CD8-positive, alpha-beta memory T cell (primary cell): ENCODE measurements at regions of chr11 and their contacts with region 1.

Region 1: DNA sequence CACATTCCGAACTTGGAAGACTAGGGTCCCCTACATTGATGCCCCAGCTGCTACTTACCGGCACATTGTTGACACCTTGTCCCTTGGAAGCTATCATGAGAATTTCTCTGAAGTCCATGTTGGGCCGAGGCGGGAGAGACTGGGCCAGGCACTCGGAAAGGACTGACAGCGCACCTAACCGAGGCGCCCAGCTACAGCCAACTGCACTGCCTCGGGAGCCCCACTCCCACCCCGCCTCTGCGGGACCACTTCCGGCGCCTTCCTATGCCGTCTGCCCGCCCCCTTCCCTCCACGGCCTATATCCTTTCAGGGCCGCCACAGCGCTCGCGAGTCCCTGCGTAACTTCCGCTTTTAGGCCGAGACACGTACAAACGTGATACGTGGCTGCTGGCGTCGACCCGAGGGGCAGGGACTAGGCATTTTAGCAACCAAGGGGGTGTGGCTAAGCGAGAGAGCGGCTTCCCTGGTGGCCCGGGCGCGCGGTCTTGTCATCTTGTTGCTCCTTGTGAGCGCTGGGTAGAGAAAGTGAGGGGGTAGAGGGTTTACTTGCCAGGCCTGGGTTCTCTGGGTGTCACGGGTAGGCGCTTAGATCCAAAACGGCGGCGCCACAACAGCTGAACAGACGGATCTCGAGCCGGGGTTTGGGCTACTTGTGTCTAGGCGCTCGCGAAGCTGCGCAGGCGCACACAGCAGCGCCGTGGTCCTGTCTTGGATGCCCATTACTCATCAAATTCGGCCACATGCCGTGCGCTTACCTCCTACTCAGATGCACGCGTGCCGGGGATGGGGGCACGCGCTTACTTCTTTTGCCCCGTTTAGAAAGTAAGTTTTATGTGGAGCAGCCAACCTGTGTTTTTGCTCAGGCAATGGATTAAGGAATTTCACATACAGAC is at the start of gene SPTY2D1:
- DNase-seq: peak; percentile 94 to 99 (median 98)
- H3K4me3 ChIP-seq: peak within 1 kb of the TSS; percentile 99
- H3K4me3 Mint-ChIP-seq: peak within 1 kb of the TSS; percentile 90 to 99 (median 96)
- H3K27ac ChIP-seq: peak within 1 kb of the TSS; percentile 93
- H3K27ac Mint-ChIP-seq: peak within 1 kb of the TSS; percentile 96 to 100 (median 98)
- H3K4me1 ChIP-seq: peaks cover 17% of the 10 kb centered on the region
- H3K4me1 Mint-ChIP-seq: peaks cover 27 to 39% (median 38%) of the 10 kb centered on the region in 3 donors
- H3K27me3 ChIP-seq: no peaks in the 10 kb centered on the region
- H3K27me3 Mint-ChIP-seq: peaks cover 4 to 5% of the 10 kb centered on the region in 2 donors
- total RNA-seq, gene SPTY2D1: 23.7 to 27.3 TPM

Region 2: GRCh38 chr11:18588297-18589252 is 45.8 kb before region 1 on chr11 and contains the start of gene UEVLD:
- CTCF ChIA-PET with region 1: no interaction called
- POLR2A ChIA-PET with region 1: interaction called, 18 read pairs
- DNase-seq: peak; percentile 43 to 75 (median 63)
- H3K4me3 ChIP-seq: peak within 1 kb of the TSS; percentile 79
- H3K4me3 Mint-ChIP-seq: no peak within 1 kb of the TSS
- H3K27ac ChIP-seq: peak within 1 kb of the TSS; percentile 83
- H3K27ac Mint-ChIP-seq: no peak within 1 kb of the TSS
- H3K4me1 ChIP-seq: peaks cover 24% of the 10 kb centered on the region
- H3K4me1 Mint-ChIP-seq: peaks cover 0 to 9% (median 0%) of the 10 kb centered on the region in 3 donors
- H3K27me3 ChIP-seq: no peaks in the 10 kb centered on the region
- H3K27me3 Mint-ChIP-seq: no peaks in the 10 kb centered on the region
- total RNA-seq, gene UEVLD: 15.6 to 16.6 TPM

Region 3: DNA sequence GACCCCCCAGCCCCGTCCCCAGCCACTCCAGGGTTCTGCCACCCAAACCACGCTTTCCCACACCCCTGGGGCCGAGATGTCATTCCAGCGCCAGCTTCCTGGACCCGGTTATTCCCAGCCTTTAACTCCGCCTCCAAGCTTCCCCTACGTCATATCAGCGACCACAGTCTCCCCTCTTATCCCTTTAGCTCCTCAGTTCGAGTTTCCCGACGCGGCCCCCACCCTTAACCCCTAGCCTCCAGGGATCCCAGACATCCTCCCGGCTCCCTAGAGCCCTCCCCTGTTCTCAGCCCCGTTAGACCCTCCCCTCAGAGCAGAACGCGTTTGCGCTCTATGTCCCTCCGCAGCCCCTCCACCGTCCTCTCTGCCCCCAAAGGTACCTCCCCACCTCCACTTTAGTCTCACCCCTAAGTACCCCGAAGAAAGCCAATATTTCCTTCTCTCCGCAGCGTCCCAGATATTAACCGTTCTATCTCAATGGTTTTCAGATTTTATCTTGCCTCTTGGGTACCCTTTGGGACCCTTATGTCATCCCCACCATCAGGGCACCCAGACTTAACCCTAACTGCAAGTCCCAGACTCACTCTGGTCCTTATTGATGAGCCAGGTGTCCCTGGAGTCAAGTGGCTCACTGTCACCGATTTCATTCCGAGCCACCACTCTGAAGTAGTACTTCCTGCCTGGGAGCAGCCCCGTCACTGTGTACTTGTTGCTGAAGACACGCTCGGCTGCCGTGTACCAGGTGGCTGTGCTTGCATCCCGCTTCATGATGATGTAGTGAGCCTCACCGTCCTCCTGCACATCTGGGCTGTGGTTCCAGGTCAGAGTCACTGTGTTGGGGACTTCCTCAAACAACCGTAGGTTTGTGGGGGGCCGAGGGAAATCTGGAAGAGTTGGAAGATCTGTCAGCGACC is 72.2 kb after region 1 on chr11:
- CTCF ChIA-PET with region 1: interaction called, 3 read pairs
- POLR2A ChIA-PET with region 1: interaction called, 14 read pairs
- DNase-seq: peak in 4 of 5 donors; percentile 53 to 76 (median 57)
- H3K4me3 ChIP-seq: peak overlapping the region; percentile 72
- H3K4me3 Mint-ChIP-seq: peak overlapping the region; percentile 88 to 94 (median 92)
- H3K27ac ChIP-seq: peak overlapping the region; percentile 19
- H3K27ac Mint-ChIP-seq: peak overlapping the region; percentile 38 to 98 (median 94)
- H3K4me1 ChIP-seq: peaks cover 10% of the 10 kb centered on the region
- H3K4me1 Mint-ChIP-seq: peaks cover 16 to 31% (median 21%) of the 10 kb centered on the region in 3 donors
- H3K27me3 ChIP-seq: no peaks in the 10 kb centered on the region
- H3K27me3 Mint-ChIP-seq: peaks cover 0 to 1% of the 10 kb centered on the region in 2 donors